Posterior cingulate gyrus (tissue), 11 donors: ENCODE measurements at regions of chr5 and their contacts with region 1.

Region 1: GRCh38 chr5:14937254-14937653 is 65.7 kb upstream of the ANKH start:
- DNase-seq: no peak

Region 2: GRCh38 chr5:14900731-14901461 is 36.4 kb before region 1 on chr5:
- intact Hi-C with region 1: loop called (anchors 5 kb)
- DNase-seq: no peak